GM18951 (cell line): ENCODE measurements at regions of chr7 and their contacts with region 1.

Region 1: DNA sequence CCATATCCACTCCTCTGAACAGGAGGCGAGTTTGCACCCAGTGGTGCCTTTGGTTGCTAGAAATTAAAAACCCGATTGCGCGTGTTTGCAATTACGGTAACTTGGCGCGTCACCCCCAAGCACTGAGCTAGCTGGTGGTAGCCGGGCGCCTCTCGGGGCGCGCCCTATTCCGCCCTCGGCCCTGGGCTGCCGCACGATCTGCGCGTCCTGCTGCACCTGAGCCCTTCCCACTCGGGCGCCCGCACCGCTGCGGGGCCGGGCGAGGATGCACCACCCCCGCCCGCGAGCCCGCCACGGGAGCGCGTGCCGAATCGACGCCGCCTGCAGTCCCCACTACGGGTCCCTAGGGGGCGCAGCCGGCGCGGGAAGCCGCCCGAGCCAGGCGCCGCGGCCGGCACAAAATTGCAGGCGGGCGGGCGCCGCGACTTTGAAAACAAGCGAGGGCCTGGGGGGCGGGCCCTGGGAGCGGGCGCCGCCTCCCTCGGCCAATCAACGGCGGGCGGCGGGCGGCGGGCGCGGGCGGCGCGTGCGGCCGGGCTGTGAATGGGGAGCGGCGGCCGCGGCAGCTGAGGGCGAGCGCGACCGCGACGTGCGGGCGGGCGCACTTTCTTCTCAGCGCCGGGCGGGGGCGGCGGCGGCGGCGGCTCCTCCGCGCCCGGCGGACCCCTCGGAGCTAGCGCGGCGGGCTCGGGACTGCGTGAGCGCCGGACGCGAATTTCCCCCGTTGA is at the start of gene SDK1:
- POLR2A ChIP-seq: no peak

Region 2: GRCh38 chr7:3897438-3898385 is 596.9 kb after region 1 on chr7:
- in situ Hi-C with region 1: loop called (anchors 25 kb)
- POLR2A ChIP-seq: no peak